AG04450 (cell line): ENCODE measurements at regions of chr20 and their contacts with region 1.

Region 1: DNA sequence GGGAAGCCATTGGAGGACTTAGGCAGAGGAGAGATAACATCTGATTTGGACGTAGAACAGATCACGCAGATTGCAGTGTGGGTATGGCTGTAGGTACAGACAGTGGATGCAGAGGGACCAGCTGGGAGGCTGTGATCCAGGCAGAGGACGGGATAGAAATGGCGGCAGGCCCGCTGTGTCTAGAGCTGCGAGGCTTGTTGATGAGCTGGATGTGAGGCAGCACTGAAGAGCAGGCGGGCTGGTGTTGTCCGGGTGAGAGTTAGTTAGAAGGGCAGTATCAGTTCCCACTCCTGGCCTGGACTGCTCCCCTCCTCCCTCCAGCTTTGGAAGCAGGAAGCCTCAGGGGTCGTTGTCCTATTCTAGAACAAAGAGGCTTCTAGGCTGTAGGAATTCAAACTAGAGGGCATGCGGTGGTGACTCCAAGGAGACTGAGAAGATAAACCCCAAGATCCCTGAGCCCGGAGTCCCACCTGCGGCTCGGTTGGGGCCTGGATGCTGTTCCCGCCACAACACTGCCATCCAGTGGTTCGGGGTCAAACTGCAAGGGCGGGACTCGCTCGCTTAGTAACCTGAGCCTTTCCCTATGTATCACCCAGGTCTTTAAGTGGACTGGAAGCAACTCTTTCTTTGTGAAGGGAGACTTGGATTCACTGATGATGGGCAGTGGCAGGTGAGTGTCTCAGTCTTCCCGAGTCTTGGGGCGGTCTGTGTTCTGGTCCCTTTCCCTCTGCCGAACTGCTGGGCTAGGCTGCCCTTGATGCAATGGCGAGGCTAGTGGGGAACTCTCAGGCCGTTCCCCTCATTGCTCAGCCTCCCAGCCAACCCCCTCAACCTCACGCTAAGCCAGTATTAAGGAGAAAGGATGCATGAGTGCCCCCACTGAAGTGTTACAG is 11.2 kb downstream of the TLDC2 start:
- DNase-seq: peak; percentile 36
- H3K4me3 ChIP-seq: peak overlapping the region; percentile 18; the same call in 1 of the 2 replicates
- H3K27ac ChIP-seq: no peak overlapping the region
- H3K27me3 ChIP-seq: no peaks in the 10 kb centered on the region
- CTCF ChIP-seq: peak; percentile 99

Region 2: GRCh38 chr20:36613974-36614373 is 273.1 kb before region 1 on chr20:
- CTCF ChIA-PET with region 1: interaction called, 22 read pairs
- POLR2A ChIA-PET with region 1: no interaction called
- DNase-seq: no peak
- H3K4me3 ChIP-seq: no peak overlapping the region
- H3K27ac ChIP-seq: no peak overlapping the region
- H3K27me3 ChIP-seq: no peaks in the 10 kb centered on the region
- CTCF ChIP-seq: no peak

Region 3: DNA sequence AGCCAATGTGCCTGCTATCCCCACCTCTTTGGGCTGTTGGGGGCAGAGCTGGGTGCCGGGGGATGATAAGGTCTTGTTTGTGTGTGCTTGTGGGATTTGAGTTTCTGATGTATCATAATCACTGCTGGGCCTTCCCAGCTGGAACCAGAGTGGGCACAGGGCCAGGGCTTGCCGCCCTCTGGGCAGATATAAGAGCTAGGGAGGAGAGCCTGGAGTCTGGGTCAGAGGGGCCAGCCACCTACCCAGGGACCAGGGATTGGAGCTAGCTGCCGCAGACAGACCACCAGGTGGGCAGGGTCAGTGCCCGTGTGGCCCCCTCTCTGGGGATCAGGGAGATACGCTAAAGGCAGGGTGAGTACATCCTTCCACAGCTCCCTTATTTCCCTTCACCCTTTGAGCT is 14.3 kb before region 1 on chr20:
- CTCF ChIA-PET with region 1: interaction called, 10 read pairs
- POLR2A ChIA-PET with region 1: no interaction called
- DNase-seq: no peak
- H3K4me3 ChIP-seq: no peak overlapping the region
- H3K27ac ChIP-seq: no peak overlapping the region
- H3K27me3 ChIP-seq: peaks cover under 1% of the 10 kb centered on the region
- CTCF ChIP-seq: no peak

Region 4: GRCh38 chr20:37007898-37008649 is 121.0 kb after region 1 on chr20:
- CTCF ChIA-PET with region 1: no interaction called
- POLR2A ChIA-PET with region 1: no interaction called
- DNase-seq: no peak
- H3K4me3 ChIP-seq: no peak overlapping the region
- H3K27ac ChIP-seq: no peak overlapping the region
- H3K27me3 ChIP-seq: no peaks in the 10 kb centered on the region
- CTCF ChIP-seq: peak; percentile 33; the same call in 1 of the 2 replicates

Region 5: DNA sequence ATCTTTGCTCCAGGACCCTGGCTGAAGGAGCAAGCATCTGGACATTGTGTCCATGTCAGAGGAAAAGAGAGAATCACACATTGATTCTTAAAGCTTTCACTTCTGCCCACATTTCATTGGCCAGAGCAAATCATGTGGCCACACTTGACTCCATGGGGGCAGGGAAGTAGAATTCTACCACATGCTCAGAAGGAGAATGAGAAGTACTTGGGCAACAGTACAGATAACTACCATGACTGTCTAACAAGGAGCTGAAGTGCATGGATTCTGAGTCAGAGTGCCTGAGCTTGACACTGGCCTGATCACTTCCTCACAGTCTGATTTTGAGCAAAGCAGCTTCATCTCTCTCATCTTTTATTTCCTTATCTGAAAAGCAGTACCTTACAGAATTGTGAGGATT is 335.9 kb after region 1 on chr20:
- CTCF ChIA-PET with region 1: no interaction called
- POLR2A ChIA-PET with region 1: no interaction called
- DNase-seq: peak; percentile 62
- H3K4me3 ChIP-seq: no peak overlapping the region
- H3K27ac ChIP-seq: no peak overlapping the region
- H3K27me3 ChIP-seq: no peaks in the 10 kb centered on the region
- CTCF ChIP-seq: no peak